Breast epithelium (tissue), 4 donors: ENCODE measurements at regions of chr7 and their contacts with region 1.

Region 1: GRCh38 chr7:43823941-43824340 is 45.4 kb downstream of the MRPS24 start:
- DNase-seq: no peak
- H3K4me3 ChIP-seq: no peak overlapping the region
- H3K27ac ChIP-seq: no peak overlapping the region
- H3K4me1 ChIP-seq: no peaks in the 10 kb centered on the region
- H3K27me3 ChIP-seq: no peaks in the 10 kb centered on the region
- CTCF ChIP-seq: no peak
- POLR2A ChIP-seq: no peak

Region 2: GRCh38 chr7:43843278-43843677 is 19.3 kb after region 1 on chr7:
- intact Hi-C with region 1: loop called (anchors 2 kb)
- DNase-seq: no peak
- H3K4me3 ChIP-seq: no peak overlapping the region
- H3K27ac ChIP-seq: no peak overlapping the region
- H3K4me1 ChIP-seq: no peaks in the 10 kb centered on the region
- H3K27me3 ChIP-seq: no peaks in the 10 kb centered on the region
- CTCF ChIP-seq: no peak
- POLR2A ChIP-seq: no peak